ENCODE measurements at regions of chr11 and their contacts with region 1.

Region 1: GRCh38 chr11:33808228-33808828 is 34.0 kb upstream of the FBXO3 start:
- DNase-seq: peak; percentile 85 to 92 (median 86)
- H3K4me3 ChIP-seq: no peak overlapping the region
- H3K27ac ChIP-seq: no peak overlapping the region
- H3K4me1 ChIP-seq: no peaks in the 10 kb centered on the region
- H3K27me3 ChIP-seq: peaks cover 0 to 8% (median 4%) of the 10 kb centered on the region in 5 experiments

Region 2: DNA sequence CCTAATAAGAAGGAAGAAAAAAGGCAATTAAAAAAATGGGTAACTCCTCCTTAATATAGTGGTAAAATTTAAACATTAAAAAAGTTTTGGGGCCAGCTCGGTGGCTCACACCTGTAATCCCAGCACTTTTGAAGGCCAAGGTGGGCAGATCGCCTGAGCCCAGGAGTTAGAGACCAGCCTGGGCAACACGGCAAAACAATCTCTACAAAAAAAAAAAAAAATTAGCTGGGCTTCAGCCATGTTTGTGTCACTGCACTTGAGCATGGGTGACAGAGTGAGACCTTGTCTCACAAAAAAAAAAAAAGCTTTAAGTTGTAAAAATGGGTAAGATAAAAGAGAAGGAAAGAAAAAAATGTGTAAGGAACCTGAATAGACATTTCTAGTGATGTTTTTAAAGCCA is 22.7 kb before region 1 on chr11:
- CTCF ChIA-PET with region 1: interaction called, 10 read pairs
- POLR2A ChIA-PET with region 1: no interaction called
- DNase-seq: no peak
- H3K4me3 ChIP-seq: no peak overlapping the region
- H3K27ac ChIP-seq: no peak overlapping the region
- H3K4me1 ChIP-seq: peaks cover 0 to 3% (median 0%) of the 10 kb centered on the region in 4 experiments
- H3K27me3 ChIP-seq: no peaks in the 10 kb centered on the region

Region 3: DNA sequence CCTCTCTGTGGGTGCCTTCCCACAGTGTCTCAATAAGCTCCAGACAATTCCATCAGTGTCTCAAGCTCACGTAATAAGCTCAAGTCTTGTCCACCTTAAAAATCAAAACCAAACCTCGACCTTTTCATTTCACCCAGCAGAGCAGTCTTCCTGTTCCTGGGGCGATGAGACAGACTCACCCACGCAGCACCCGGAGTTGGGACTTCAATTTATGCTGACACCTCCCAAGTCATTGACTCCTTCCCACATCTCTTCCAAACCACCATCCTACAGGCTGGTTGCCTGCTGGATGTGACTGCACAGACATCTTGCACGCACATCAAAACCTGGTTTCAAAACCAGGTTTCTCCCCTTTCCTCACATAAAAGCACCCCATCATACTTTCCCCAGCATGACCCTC is 10.9 kb after region 1 on chr11:
- CTCF ChIA-PET with region 1: interaction called, 149 read pairs
- POLR2A ChIA-PET with region 1: no interaction called
- DNase-seq: no peak
- H3K4me3 ChIP-seq: no peak overlapping the region
- H3K27ac ChIP-seq: no peak overlapping the region
- H3K4me1 ChIP-seq: no peaks in the 10 kb centered on the region
- H3K27me3 ChIP-seq: peaks cover 0 to 28% (median 13%) of the 10 kb centered on the region in 5 experiments

Region 4: GRCh38 chr11:33829433-33830141 is 21.3 kb after region 1 on chr11:
- CTCF ChIA-PET with region 1: interaction called, 149 read pairs
- POLR2A ChIA-PET with region 1: no interaction called
- DNase-seq: peak; percentile 73 to 86 (median 83)
- H3K4me3 ChIP-seq: peak overlapping the region in 6 of 7 experiments; percentile 20 to 75 (median 58)
- H3K27ac ChIP-seq: no peak overlapping the region
- H3K4me1 ChIP-seq: peaks cover 0 to 12% (median 8%) of the 10 kb centered on the region in 4 experiments
- H3K27me3 ChIP-seq: peaks cover 9 to 35% (median 17%) of the 10 kb centered on the region in 5 experiments

Region 5: DNA sequence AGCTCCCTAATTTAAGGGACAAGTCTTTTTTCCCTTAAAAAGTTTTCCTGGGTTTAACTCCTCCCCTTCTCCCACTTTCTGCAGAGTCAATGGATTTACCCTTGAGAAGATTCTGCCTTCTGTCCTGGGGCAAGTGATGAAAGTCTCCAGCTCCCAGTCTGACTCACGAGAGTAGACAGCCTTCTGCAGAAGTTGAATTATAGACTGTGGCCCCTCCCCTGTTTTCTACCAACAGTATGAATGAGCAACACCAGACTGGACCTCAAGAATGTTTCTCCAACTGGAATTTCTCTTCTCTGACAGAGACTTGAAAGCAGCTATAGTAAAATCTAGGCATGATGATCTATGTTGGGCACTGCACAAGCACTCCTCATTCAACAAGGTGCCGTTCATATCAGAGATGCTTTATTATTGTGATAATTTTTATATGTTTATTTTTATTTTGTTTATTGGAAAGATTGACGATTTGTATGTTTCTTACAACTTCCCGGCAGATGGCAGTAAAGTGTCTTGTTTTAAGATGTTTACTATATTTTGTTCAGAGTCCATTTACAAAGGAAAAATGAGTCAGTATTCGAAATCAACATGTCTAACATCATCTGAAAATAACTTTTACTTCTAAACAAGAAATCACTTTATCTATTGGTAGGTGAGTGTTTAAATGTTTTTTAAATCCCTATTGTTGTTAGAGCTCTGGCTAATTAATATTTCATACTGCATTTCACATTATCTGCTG is 27.0 kb after region 1 on chr11:
- CTCF ChIA-PET with region 1: interaction called, 149 read pairs
- POLR2A ChIA-PET with region 1: no interaction called
- DNase-seq: peak; percentile 36 to 75 (median 69)
- H3K4me3 ChIP-seq: no peak overlapping the region
- H3K27ac ChIP-seq: no peak overlapping the region
- H3K4me1 ChIP-seq: no peaks in the 10 kb centered on the region
- H3K27me3 ChIP-seq: peaks cover 0 to 2% (median 0%) of the 10 kb centered on the region in 5 experiments

Region 6: DNA sequence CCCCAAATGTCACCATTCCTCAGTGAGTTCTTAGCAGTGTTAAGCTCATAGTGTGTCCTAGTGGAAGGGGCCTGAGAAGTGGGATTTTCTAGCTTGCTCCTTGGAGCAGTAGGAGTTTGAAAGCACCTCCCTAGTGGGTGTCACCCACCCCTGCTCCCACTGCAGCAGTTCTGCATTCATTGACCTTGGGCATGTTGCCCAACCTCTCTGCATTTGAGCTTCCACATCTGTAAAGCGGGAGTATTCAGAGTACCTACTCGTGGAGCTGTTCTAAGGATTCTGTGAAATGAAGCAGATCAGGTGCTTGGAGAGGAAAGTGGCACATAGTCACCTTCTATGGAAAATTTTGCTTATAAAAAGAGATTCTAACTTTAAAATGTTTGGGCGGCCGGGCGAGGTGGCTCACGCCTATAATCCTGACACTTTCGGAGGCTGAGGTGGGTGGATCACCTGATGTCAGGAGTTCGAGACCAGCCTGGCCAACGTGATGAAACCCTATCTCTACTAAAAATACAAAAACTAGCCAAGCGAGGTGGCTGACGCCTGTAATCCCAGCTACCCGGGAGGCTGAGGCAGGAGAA is 66.7 kb after region 1 on chr11:
- CTCF ChIA-PET with region 1: no interaction called
- POLR2A ChIA-PET with region 1: no interaction called
- DNase-seq: no peak
- H3K4me3 ChIP-seq: peak overlapping the region in 2 of 7 experiments; percentile 50 to 52
- H3K27ac ChIP-seq: peak overlapping the region in 1 of 2 experiments; percentile 91
- H3K4me1 ChIP-seq: peaks cover 29 to 91% (median 68%) of the 10 kb centered on the region in 4 experiments
- H3K27me3 ChIP-seq: no peaks in the 10 kb centered on the region

Region 7: GRCh38 chr11:33996498-33997454 is 188.4 kb after region 1 on chr11:
- CTCF ChIA-PET with region 1: interaction called, 13 read pairs
- POLR2A ChIA-PET with region 1: no interaction called
- DNase-seq: peak; percentile 72 to 85 (median 81)
- H3K4me3 ChIP-seq: peak overlapping the region in 4 of 7 experiments; percentile 5 to 54 (median 32)
- H3K27ac ChIP-seq: no peak overlapping the region
- H3K4me1 ChIP-seq: peaks cover 0 to 8% (median 7%) of the 10 kb centered on the region in 4 experiments
- H3K27me3 ChIP-seq: peaks cover 0 to 8% (median 4%) of the 10 kb centered on the region in 5 experiments

Measured in common myeloid progenitor, CD34-positive (primary cell).